Tibial artery (tissue), 4 donors: ENCODE measurements at regions of chr21 and their contacts with region 1.

Region 1: DNA sequence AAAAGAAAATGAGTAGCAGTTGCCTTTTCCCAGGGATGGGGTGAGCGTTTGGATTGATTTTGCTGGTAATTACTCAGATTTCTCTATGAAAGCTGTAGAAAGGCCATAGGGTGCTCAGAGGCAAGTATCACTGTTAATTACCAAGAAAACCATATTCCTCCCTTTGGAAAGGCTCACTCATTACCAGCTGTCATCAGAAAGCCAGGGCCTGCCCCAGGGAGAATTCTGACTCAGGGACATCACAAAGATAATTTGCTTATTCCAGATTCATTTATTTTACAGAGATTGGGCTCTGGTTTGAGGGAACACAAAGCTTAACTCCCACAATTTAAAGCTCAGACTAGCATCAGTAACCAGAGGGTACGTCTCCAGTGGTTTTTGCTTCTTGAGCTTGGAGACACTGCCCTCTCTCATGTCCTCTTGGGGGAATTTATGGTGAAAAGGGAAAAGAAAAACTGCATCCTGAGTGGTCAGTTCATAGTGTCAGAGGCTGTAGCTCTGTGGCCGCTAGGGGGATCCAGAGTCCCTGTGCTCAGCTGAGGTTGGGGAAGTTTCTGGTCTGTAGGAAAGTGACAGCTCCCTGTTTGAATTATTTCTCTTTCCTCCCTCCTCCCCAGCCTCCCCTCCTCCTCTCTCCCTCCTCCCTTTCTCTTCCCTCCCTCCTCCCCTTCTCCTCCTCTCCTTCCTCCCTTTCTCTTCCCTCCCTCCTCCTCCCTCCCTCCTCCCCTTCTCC is 204.3 kb downstream of the KCNJ6 start:
- DNase-seq: peak; percentile 59 to 80
- H3K4me3 ChIP-seq: no peak overlapping the region
- H3K27ac ChIP-seq: peak overlapping the region; percentile 71 to 73
- H3K4me1 ChIP-seq: peaks cover 0 to 37% (median 12%) of the 10 kb centered on the region in 4 donors
- H3K27me3 ChIP-seq: no peaks in the 10 kb centered on the region
- CTCF ChIP-seq: peak; percentile 78 to 89

Region 2: DNA sequence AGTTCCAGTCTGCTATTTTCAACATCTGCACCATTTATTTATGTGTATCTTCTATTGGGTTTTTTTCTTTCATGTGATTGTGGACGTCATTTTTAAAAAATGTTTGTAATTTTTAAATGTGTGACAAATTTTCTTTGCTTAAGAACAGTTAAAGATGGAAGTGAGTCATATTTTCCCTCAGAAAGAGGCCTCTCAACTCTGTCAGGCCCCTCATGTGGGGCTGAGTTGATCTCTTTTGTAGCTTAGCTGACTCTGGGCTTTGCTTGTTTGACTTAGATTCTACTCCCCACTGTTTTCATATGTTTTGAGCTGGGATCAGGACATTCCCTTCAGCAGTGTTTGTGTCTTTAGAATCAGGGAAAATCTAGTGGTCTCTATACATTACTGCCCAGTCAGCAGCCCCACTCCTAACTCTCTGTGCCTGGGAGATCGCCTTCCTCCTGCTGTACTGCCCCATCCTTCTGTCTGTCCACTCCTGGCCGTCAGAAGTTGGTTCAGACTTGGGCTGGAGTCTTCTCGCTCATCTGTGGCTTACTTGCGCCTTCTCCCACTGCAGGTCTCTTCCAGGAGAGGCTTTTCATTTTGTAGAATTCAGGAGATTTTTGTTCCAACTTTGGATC is 208.0 kb before region 1 on chr21:
- intact Hi-C with region 1: no loop called
- DNase-seq: no peak
- H3K4me3 ChIP-seq: no peak overlapping the region
- H3K27ac ChIP-seq: no peak overlapping the region
- H3K4me1 ChIP-seq: no peaks in the 10 kb centered on the region
- H3K27me3 ChIP-seq: no peaks in the 10 kb centered on the region
- CTCF ChIP-seq: no peak

Region 3: GRCh38 chr21:37742532-37742931 is 30.5 kb after region 1 on chr21:
- intact Hi-C with region 1: no loop called
- DNase-seq: no peak
- H3K4me3 ChIP-seq: no peak overlapping the region
- H3K27ac ChIP-seq: no peak overlapping the region
- H3K4me1 ChIP-seq: peaks cover 0 to 48% (median 14%) of the 10 kb centered on the region in 4 donors
- H3K27me3 ChIP-seq: no peaks in the 10 kb centered on the region
- CTCF ChIP-seq: no peak

Region 4: DNA sequence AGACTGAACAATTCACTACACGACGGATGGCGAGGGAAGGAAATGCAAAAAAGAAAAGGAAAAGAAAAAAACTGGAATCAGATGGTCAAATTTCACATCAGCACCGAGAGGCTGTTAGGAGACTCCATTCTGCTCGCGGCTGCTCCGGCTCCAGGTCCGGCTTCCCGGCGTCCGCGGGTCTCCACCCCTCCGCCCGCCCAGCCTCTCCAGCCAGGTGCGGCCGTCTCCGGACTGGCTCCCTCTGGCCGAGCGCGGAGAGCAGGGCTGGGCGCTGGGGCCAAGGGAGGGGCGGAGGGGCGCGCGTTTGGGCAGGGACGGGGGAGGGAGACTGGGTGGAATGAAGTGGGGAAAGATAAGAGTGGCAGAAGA is 203.9 kb after region 1 on chr21:
- intact Hi-C with region 1: loop called (anchors 2 kb)
- DNase-seq: no peak
- H3K4me3 ChIP-seq: peak overlapping the region; percentile 21 to 37
- H3K27ac ChIP-seq: no peak overlapping the region
- H3K4me1 ChIP-seq: peaks cover 0 to 23% (median 20%) of the 10 kb centered on the region in 4 donors
- H3K27me3 ChIP-seq: peaks cover 0 to 72% of the 10 kb centered on the region in 2 donors
- CTCF ChIP-seq: no peak

Region 5: GRCh38 chr21:38126669-38127303 is 414.8 kb after region 1 on chr21:
- intact Hi-C with region 1: loop called (anchors 5 kb)
- DNase-seq: peak; percentile 41 to 70
- H3K4me3 ChIP-seq: no peak overlapping the region
- H3K27ac ChIP-seq: no peak overlapping the region
- H3K4me1 ChIP-seq: no peaks in the 10 kb centered on the region
- H3K27me3 ChIP-seq: peaks cover 0 to 6% of the 10 kb centered on the region in 2 donors
- CTCF ChIP-seq: peak; percentile 57 to 75